Sigmoid colon (tissue), 7 donors: ENCODE measurements at regions of chr10 and their contacts with region 1.

Region 1: DNA sequence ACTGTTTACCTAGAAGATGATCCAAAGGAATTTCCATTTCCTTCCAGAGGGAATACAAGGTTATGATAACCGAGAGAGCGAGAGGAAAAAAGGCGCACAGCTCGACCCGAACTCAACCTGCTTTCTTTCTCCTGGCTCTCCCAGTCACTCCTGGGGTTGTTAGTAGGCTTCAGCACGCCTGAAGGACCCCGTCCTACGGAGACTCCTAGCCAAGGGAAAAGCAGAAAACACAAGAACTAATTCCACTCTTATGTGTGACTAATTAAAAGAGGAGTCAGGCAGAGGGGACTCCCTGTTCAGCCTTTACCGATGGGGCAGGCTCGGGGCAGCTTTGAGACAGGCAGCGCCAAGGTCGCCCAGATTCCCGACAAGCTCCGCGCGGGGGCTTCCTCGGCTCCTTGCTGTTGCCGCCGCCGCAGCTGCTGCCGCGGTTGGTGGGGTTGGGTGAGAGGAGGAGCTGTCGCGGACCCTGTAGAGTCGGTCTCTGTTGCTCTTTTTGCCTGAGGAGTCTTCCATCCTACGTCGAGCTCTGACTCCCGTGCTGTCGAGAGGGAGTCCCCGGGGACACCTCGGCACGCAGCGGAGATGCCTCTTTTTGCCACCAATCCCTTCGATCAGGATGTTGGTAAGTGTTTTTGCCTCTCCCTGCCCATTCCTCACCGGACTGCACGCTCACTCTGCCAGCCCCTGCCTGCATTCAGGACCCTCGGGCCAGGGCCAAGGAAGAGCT is at the start of gene STAM:
- DNase-seq: peak; percentile 90
- H3K4me3 ChIP-seq: peak within 1 kb of the TSS; percentile 59 to 73 (median 69)
- H3K27ac ChIP-seq: peak within 1 kb of the TSS; percentile 86 to 97 (median 91)
- H3K4me1 ChIP-seq: peaks cover 0 to 46% (median 31%) of the 10 kb centered on the region in 4 donors
- H3K27me3 ChIP-seq: no peaks in the 10 kb centered on the region
- CTCF ChIP-seq: no peak
- EP300 ChIP-seq: peak in 1 of 4 donors; percentile 55
- POLR2A ChIP-seq: peak; percentile 19 to 31
- total RNA-seq, gene STAM: 13.7 to 19.3 (median 16.8) TPM

Region 2: GRCh38 chr10:17273403-17273802 is 370.5 kb before region 1 on chr10:
- intact Hi-C with region 1: no loop called
- DNase-seq: no peak
- H3K4me3 ChIP-seq: no peak overlapping the region
- H3K27ac ChIP-seq: no peak overlapping the region
- H3K4me1 ChIP-seq: no peaks in the 10 kb centered on the region
- H3K27me3 ChIP-seq: no peaks in the 10 kb centered on the region
- CTCF ChIP-seq: no peak
- EP300 ChIP-seq: no peak
- POLR2A ChIP-seq: no peak

Region 3: DNA sequence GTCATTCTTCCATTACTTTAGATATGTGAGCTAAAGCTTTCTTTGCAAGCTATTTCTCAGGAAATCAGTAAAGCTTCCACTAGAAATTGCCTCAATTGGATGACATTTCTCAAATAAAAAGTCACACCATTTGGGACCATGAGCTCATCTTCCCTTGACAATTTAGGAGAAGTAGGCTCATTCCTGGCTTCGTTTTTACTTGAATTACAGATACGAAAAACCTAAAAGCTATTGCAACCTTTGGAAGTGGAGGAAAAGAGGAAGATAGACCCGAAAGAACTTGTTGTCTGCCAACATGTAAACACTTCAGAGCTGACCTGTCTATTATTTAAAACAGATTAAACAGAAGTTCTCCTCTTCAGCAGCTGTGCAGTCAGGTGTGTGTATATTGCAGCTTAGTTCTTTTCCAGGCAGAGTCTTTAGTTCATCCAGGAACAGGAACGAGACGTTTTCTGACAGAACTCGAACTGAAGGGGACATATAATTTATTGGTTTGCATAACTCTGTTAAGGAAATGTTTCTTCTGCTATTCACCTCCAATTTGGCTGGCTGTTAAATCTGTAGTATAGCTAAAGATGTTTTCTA is 146.4 kb before region 1 on chr10:
- intact Hi-C with region 1: no loop called
- DNase-seq: no peak
- H3K4me3 ChIP-seq: no peak overlapping the region
- H3K27ac ChIP-seq: no peak overlapping the region
- H3K4me1 ChIP-seq: no peaks in the 10 kb centered on the region
- H3K27me3 ChIP-seq: no peaks in the 10 kb centered on the region
- CTCF ChIP-seq: no peak
- EP300 ChIP-seq: no peak
- POLR2A ChIP-seq: no peak

Region 4: DNA sequence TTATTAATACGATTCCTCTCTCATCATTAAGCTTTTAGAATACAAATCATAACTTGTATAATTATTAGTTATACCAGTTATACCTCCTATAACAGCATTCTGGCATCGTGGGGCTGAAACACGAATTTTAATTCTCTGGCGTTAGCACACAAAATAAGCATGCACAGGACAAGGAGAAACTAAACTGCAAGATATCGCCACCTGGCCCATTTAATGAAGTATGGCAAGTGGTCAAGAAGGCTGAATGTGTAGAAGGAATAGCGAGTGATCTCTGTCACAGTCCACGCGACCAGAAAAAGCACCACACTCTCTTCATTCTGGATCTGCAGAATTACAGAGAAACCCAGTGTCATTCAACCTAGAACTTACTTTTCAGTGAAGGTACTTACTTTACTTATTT is 44.8 kb before region 1 on chr10:
- intact Hi-C with region 1: no loop called
- DNase-seq: no peak
- H3K4me3 ChIP-seq: no peak overlapping the region
- H3K27ac ChIP-seq: no peak overlapping the region
- H3K4me1 ChIP-seq: no peaks in the 10 kb centered on the region
- H3K27me3 ChIP-seq: no peaks in the 10 kb centered on the region
- CTCF ChIP-seq: no peak
- EP300 ChIP-seq: no peak
- POLR2A ChIP-seq: no peak

Region 5: DNA sequence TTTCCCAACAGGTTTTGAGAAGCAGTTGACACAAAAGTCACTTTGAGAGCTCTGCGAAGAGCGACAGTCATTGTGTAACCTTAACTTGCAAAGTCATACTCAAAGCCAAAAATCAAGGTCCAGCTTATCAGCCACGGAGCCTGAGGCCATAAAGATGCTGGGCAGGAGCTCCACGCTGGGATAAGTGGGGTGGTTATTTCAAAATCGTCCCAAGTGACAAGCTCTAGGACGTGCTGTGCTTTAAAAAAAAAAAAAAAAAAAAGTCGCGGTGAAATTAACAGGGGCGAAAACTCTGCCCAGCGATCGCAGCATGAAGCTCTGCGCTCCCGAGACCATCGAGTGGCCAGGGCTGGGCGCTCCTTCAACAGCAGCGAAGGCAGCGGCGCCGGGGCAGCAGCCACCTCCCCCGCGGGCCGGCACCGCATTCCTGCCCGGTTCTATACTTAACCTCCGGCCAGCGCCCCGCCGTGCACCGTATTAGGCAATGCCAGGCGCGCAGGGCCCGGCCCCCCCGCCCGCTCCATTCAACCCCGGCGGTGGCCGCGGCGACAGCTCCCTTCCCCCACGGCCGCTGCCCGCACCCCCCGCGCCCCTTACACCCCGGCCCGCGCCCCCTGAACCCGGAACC is 27.4 kb before region 1 on chr10:
- intact Hi-C with region 1: loop called (anchors 1 kb)
- DNase-seq: peak; percentile 90
- H3K4me3 ChIP-seq: peak overlapping the region; percentile 79 to 96 (median 88)
- H3K27ac ChIP-seq: peak overlapping the region; percentile 96 to 98 (median 98)
- H3K4me1 ChIP-seq: peaks cover 0 to 14% (median 5%) of the 10 kb centered on the region in 4 donors
- H3K27me3 ChIP-seq: no peaks in the 10 kb centered on the region
- CTCF ChIP-seq: no peak
- EP300 ChIP-seq: no peak
- POLR2A ChIP-seq: no peak